Endothelial cell of umbilical vein (primary cell): ENCODE measurements at regions of chr7 and their contacts with region 1.

Region 1: GRCh38 chr7:27605689-27606269 is 56.9 kb downstream of the HIBADH start:
- DNase-seq: peak; percentile 63
- H3K4me3 ChIP-seq: peak overlapping the region in 1 of 3 experiments; percentile 24
- H3K27ac ChIP-seq: peak overlapping the region; percentile 66
- H3K4me1 ChIP-seq: peaks cover 25% of the 10 kb centered on the region
- H3K27me3 ChIP-seq: no peaks in the 10 kb centered on the region
- CTCF ChIP-seq: peak in 1 of 2 donors; percentile 41
- POLR2A ChIP-seq: no peak

Region 2: DNA sequence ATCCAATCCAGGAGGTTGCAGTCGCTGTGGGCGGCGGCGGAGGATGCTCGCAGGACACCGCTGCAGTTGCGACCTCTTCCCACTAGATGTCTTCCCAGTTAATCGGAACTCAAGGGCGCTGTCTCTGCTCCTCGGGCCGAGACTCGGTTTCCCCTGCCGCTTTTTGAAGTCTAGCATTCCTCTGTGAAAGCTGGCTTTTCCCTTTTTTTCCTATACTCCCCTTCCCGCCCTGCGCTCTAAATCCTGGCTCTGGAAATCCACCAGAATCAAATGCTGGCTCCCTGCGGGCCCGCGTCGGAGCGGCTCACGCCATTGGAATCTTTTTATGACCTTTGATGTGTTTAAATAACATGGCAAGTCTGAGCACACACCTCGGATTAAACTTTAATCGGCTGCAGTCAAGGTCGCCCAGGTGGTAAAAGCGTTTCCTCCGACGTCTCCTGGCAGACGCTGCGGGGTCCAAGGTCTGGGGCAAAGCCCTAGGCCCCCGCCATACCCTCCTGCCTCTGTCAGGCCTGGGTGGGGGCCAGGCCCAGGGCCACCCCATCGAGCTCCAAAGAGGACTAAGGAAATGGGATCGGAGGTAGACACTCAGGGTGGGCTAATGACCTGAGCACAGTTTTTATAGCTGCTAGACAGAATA is 395.2 kb before region 1 on chr7:
- CTCF ChIA-PET with region 1: interaction called, 19 read pairs
- POLR2A ChIA-PET with region 1: no interaction called
- dilution Hi-C with region 1: no loop called
- intact Hi-C with region 1: no loop called
- DNase-seq: no peak
- H3K4me3 ChIP-seq: peak overlapping the region in 1 of 3 experiments; percentile 29
- H3K27ac ChIP-seq: no peak overlapping the region
- H3K4me1 ChIP-seq: peaks cover 15% of the 10 kb centered on the region
- H3K27me3 ChIP-seq: peaks cover 73 to 77% of the 10 kb centered on the region in 2 experiments
- CTCF ChIP-seq: peak; percentile 56 to 82
- POLR2A ChIP-seq: no peak

Region 3: GRCh38 chr7:27593226-27593625 is 12.6 kb before region 1 on chr7:
- CTCF ChIA-PET with region 1: interaction called, 12 read pairs
- POLR2A ChIA-PET with region 1: no interaction called
- dilution Hi-C with region 1: no loop called
- intact Hi-C with region 1: no loop called
- DNase-seq: peak; percentile 19
- H3K4me3 ChIP-seq: no peak overlapping the region
- H3K27ac ChIP-seq: no peak overlapping the region
- H3K4me1 ChIP-seq: peaks cover 4% of the 10 kb centered on the region
- H3K27me3 ChIP-seq: no peaks in the 10 kb centered on the region
- CTCF ChIP-seq: no peak
- POLR2A ChIP-seq: no peak

Region 4: DNA sequence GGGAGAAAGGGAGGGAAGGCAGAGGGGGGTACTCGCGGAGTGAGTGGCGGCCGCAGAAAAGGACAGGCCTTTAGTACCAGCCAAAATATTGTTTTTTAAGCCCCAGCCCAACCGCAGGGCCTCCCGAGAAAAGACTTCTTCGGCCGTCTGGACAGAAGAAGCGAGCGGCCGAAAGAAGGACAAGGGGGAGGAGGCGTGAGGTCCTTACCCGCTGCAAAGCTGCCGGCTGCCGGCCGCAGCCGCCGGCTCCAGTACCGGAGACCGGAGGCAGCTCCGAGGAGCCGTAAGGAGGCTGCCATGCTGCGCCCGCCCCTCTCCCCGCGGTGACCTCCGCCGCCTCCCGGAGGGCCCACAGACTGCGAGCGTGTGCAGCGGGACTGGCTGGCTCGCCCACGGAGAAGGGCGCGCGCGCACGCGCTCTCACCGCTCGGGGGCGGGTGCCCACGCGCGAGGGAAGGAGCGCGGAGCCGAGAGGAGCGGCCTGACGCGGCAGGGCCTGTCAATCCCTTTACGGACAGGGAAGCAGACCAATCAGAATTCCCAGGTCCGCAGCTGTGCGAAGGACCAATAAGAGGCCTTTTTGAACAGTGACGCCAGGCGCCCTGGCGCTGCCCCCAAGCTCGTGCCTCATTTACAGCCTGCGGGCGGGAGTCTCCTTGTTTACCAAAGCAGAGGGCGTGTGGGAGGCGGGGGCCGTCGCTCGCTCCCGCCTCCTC is 56.9 kb after region 1 on chr7 and contains the start of gene HIBADH:
- CTCF ChIA-PET with region 1: interaction called, 18 read pairs
- POLR2A ChIA-PET with region 1: no interaction called
- dilution Hi-C with region 1: no loop called
- intact Hi-C with region 1: loop called (anchors 1 kb)
- DNase-seq: peak; percentile 99
- H3K4me3 ChIP-seq: peak within 1 kb of the TSS; percentile 63 to 83 (median 69)
- H3K27ac ChIP-seq: peak within 1 kb of the TSS; percentile 74
- H3K4me1 ChIP-seq: peaks cover 7% of the 10 kb centered on the region
- H3K27me3 ChIP-seq: no peaks in the 10 kb centered on the region
- CTCF ChIP-seq: no peak
- POLR2A ChIP-seq: peak; percentile 70
- total RNA-seq, gene HIBADH: 19.7 and 22.6 TPM in 2 replicates

Region 5: DNA sequence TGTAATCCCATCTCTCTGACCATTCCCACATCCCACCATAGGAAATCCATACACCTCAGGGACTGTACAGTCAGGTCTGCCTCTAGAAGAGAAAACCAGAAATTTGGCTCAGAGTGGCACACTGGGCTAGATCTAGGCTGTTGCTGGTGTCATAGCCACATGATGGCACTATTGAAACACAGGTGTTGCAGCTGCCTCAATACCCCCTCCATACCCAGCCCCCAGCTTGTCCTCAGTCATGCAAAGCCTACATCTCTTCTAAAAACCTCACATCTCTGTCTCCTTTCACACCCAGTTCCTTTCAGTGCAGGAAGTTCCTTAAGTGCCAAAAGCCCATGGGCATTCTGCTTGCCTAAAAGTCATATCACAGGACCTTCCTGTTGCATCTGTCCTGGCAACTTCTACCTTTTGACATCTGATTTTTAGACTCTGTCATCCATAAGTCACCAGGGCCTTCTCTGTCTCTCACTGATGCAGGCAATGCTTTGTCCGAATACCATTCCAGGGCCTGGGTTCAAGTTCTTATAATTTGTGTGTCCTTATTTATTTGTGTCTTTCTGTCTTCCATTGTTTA is 83.9 kb after region 1 on chr7:
- CTCF ChIA-PET with region 1: interaction called, 11 read pairs
- POLR2A ChIA-PET with region 1: no interaction called
- dilution Hi-C with region 1: no loop called
- intact Hi-C with region 1: no loop called
- DNase-seq: peak; percentile 69
- H3K4me3 ChIP-seq: no peak overlapping the region
- H3K27ac ChIP-seq: no peak overlapping the region
- H3K4me1 ChIP-seq: peaks cover 10% of the 10 kb centered on the region
- H3K27me3 ChIP-seq: no peaks in the 10 kb centered on the region
- CTCF ChIP-seq: peak; percentile 42 to 72
- POLR2A ChIP-seq: no peak

Region 6: GRCh38 chr7:27739909-27740448 is 134.2 kb after region 1 on chr7 and contains the start of gene TAX1BP1:
- CTCF ChIA-PET with region 1: interaction called, 16 read pairs
- POLR2A ChIA-PET with region 1: no interaction called
- dilution Hi-C with region 1: no loop called
- intact Hi-C with region 1: loop called (anchors 1 kb)
- DNase-seq: peak; percentile 94
- H3K4me3 ChIP-seq: peak within 1 kb of the TSS; percentile 78 to 83 (median 81)
- H3K27ac ChIP-seq: peak within 1 kb of the TSS; percentile 93
- H3K4me1 ChIP-seq: peaks cover 13% of the 10 kb centered on the region
- H3K27me3 ChIP-seq: no peaks in the 10 kb centered on the region
- CTCF ChIP-seq: no peak
- POLR2A ChIP-seq: peak; percentile 96
- total RNA-seq, gene TAX1BP1: 70.4 and 77.7 TPM in 2 replicates

Region 7: DNA sequence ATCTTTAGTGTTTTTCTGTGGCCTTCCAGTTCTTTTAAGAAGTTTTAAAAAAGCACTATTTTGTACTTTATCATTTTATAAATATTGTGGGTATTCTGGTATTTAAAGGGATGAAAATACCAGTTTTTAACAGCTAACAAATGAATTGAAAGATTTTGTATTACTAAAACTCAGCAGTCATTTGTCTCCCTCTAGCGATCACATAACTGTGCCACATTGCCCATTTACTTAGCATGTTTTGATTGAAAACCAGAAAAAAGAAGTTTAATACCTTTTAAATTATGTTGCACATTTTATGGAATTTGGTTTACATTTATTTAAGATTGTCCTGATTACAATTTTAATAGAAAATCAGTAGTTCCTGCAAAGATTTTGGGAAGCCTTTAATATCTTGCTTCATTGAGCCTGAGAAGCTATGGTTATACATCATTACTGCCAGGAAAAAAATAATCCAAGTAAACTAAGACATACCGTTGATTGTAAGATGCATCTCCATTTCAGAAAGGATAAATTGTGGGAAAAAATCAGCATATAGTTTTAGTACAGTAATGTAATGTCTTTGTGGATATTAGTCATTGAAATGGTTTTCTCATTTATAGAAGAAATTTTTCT is 169.0 kb after region 1 on chr7:
- CTCF ChIA-PET with region 1: interaction called, 26 read pairs
- POLR2A ChIA-PET with region 1: interaction called, 3 read pairs
- dilution Hi-C with region 1: no loop called
- intact Hi-C with region 1: no loop called
- DNase-seq: peak; percentile 59
- H3K4me3 ChIP-seq: no peak overlapping the region
- H3K27ac ChIP-seq: no peak overlapping the region
- H3K4me1 ChIP-seq: no peaks in the 10 kb centered on the region
- H3K27me3 ChIP-seq: no peaks in the 10 kb centered on the region
- CTCF ChIP-seq: peak; percentile 45 to 46
- POLR2A ChIP-seq: no peak

Region 8: GRCh38 chr7:27952456-27953285 is 346.9 kb after region 1 on chr7:
- CTCF ChIA-PET with region 1: no interaction called
- POLR2A ChIA-PET with region 1: no interaction called
- dilution Hi-C with region 1: no loop called
- intact Hi-C with region 1: no loop called
- DNase-seq: no peak
- H3K4me3 ChIP-seq: no peak overlapping the region
- H3K27ac ChIP-seq: no peak overlapping the region
- H3K4me1 ChIP-seq: no peaks in the 10 kb centered on the region
- H3K27me3 ChIP-seq: no peaks in the 10 kb centered on the region
- CTCF ChIP-seq: no peak
- POLR2A ChIP-seq: no peak